ENCODE measurements at regions of chr2 and their contacts with region 1.

Region 1: DNA sequence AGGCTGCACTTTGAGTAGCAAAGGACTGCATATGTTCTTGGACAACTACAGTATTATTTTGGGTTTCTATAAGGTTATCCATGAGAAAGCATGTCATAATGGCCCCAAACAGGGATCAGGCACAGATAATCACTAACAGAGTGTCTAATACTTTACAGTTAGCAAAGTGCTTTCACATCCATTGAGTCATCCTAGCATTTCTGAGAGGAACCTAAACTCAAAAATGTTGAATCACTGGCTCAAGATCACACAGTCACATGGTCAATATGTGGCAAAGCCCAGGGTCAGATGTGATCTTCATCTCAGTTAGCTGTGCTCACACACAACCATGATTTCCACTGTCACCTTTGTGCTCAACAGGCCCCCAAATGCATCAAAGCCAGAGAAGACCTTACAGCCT is 156.1 kb upstream of the VRK2 start:
- H3K4me3 Mint-ChIP-seq: no peak overlapping the region
- H3K27ac Mint-ChIP-seq: no peak overlapping the region
- H3K4me1 Mint-ChIP-seq: peaks cover 12% of the 10 kb centered on the region
- H3K27me3 Mint-ChIP-seq: no peaks in the 10 kb centered on the region

Region 2: GRCh38 chr2:58010599-58010998 is 120.1 kb after region 1 on chr2:
- intact Hi-C with region 1: no loop called
- H3K4me3 Mint-ChIP-seq: no peak overlapping the region
- H3K27ac Mint-ChIP-seq: no peak overlapping the region
- H3K4me1 Mint-ChIP-seq: no peaks in the 10 kb centered on the region
- H3K27me3 Mint-ChIP-seq: no peaks in the 10 kb centered on the region

Region 3: DNA sequence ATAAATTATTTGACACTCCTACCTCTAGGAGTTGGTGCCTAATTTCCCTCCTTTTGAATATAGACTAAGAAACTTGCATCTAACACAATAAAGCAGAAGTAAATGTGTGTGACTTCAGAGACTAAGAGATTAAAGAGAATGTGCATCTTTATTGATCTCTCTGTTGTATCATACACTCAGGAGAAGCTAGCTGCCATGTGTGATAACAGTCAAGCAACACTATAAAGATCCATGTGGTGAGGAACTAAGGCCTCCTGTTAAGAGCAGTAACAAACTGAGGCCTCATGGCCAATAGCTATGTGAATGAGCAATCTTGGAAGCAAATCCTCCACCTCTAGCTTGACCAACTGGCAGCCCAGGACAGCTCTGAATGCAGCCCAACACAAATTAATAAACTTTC is 347.3 kb after region 1 on chr2:
- intact Hi-C with region 1: loop called (anchors 10 kb)
- H3K4me3 Mint-ChIP-seq: no peak overlapping the region
- H3K27ac Mint-ChIP-seq: no peak overlapping the region
- H3K4me1 Mint-ChIP-seq: no peaks in the 10 kb centered on the region
- H3K27me3 Mint-ChIP-seq: no peaks in the 10 kb centered on the region

Measured in dendritic cell treated with granulocyte-macrophage colony-stimulating factor and Interleukin-4, amounts not matched to agents 40 ng/mL and 50 ng/mL, for 4 days (primary cell).